MCF 10A (cell line): ENCODE measurements at regions of chr14 and their contacts with region 1.

Region 1: GRCh38 chr14:23631702-23632460 is 4.3 kb upstream of the DHRS2 start:
- DNase-seq: peak; percentile 91
- H3K4me3 Mint-ChIP-seq: no peak overlapping the region
- H3K27ac Mint-ChIP-seq: no peak overlapping the region
- H3K4me1 Mint-ChIP-seq: peaks cover 9% of the 10 kb centered on the region
- H3K27me3 Mint-ChIP-seq: no peaks in the 10 kb centered on the region
- CTCF ChIP-seq: peak; percentile 89

Region 2: DNA sequence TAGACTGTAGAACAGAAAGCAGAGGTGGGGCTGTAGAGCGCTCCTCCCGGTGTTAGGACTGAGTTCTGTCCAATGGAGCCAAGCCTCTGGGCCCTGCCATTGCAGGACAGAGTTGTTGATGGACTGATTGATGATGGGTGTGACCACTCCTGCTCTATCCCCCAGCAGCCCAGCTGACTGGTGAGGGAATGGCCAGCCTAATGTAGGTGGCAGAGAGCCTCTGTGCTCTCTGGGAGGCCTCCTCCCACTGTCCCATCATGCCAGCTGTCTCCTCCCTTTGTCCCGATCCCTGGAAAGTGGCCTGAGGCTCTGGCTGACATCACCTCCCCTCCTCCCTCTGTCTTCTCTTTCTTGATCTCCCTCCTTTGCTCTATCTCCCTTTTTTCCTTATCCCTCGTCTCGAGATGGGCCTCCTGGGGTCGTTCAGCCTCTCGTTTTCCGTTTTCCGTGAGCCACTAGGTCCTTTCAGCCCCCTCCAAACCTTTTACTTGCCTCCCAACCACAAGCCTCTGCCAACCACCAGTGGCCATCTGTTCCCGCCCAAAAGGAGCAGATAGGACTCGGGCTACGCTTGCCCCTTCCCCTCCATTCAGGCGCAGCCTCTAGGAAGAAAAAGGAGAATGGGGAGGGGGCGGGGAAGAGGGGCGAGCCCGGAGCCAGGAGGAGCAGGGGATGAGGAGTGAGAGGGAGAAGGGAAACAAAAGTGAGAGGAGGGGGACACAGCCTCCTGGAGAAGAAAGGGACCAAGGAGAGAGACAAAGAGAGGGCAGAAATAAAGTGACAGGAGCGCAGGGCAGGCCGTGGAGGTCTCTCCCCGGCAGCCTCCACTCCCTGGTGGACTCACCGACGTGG is 267.5 kb before region 1 on chr14:
- CTCF ChIA-PET with region 1: no interaction called
- POLR2A ChIA-PET with region 1: no interaction called
- intact Hi-C with region 1: no loop called
- DNase-seq: no peak
- H3K4me3 Mint-ChIP-seq: no peak overlapping the region
- H3K27ac Mint-ChIP-seq: no peak overlapping the region
- H3K4me1 Mint-ChIP-seq: no peaks in the 10 kb centered on the region
- H3K27me3 Mint-ChIP-seq: peaks cover 42% of the 10 kb centered on the region
- CTCF ChIP-seq: no peak

Region 3: GRCh38 chr14:23399591-23399990 is 232.3 kb before region 1 on chr14:
- CTCF ChIA-PET with region 1: no interaction called
- POLR2A ChIA-PET with region 1: no interaction called
- intact Hi-C with region 1: no loop called
- DNase-seq: no peak
- H3K4me3 Mint-ChIP-seq: no peak overlapping the region
- H3K27ac Mint-ChIP-seq: no peak overlapping the region
- H3K4me1 Mint-ChIP-seq: no peaks in the 10 kb centered on the region
- H3K27me3 Mint-ChIP-seq: peaks cover 42% of the 10 kb centered on the region
- CTCF ChIP-seq: no peak

Region 4: DNA sequence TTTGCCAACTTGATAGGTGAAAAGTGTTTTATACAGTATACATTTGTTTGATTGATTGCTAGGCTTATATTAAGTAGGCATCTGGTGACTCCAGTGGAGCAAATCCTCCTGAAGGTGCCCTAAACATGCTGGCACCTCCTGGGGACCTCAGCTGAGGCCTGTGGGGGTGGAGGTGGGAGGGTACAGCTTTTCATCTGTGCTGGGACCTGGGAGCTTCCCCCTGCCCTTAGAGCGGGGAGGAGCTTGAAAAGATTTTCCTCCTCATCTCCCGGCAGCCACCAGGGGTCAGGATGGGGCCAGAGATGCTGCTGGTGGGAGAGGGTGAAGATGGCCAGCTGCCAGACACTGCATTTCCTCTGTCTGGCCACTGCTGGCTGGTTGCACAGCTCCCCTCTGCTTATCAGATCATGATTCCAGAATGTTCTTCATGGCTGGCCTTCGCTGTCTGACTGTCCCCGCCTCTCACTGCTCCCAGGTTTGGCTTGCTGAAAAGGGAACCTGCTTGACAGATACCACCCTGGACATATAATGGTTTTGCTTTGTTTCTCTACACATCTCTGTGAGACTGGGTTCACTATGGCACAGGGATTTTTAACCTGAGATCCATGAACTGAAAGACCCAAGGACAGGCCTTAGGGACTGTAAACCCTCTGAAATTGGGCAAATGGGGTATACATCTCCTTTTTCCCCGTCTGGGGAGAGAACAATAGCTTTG is 42.8 kb before region 1 on chr14:
- CTCF ChIA-PET with region 1: interaction called, 30 read pairs
- POLR2A ChIA-PET with region 1: interaction called, 11 read pairs
- intact Hi-C with region 1: no loop called
- DNase-seq: peak; percentile 84
- H3K4me3 Mint-ChIP-seq: no peak overlapping the region
- H3K27ac Mint-ChIP-seq: no peak overlapping the region
- H3K4me1 Mint-ChIP-seq: no peaks in the 10 kb centered on the region
- H3K27me3 Mint-ChIP-seq: no peaks in the 10 kb centered on the region
- CTCF ChIP-seq: peak; percentile 74

Region 5: DNA sequence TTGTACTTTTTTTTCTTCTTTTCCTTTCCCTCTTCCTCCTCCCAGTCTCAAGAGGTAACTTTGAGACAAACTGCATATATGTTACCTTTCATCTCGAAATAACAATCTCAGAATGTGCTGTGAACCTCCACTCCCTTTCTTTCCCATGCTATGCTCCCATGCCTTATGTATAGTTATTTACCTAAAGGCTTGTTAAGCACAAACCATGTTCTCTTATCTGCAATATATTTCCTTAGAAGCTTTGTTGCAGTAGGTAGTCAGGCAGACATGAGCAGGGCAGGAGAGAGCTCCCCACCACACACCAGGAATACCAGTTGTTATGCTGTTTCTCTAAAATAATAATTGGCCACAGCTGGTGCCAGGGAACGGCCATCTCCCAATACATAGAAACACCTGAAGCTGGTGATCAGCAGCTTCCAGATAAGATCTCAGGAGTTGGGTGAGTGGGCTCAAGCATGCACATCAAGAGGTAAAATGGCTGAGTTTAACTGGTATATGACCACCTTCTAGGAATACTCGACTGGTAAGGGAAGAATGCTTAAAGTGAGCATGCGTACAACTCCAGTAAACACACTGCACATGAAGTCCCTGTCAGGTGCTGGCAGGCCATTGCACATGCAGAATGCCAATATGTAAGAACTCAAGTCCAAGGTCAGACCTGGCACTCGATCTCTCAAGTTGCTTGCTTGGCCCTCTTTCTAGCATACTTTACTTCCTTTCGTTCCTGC is 10.5 kb before region 1 on chr14:
- CTCF ChIA-PET with region 1: interaction called, 23 read pairs
- POLR2A ChIA-PET with region 1: no interaction called
- intact Hi-C with region 1: no loop called
- DNase-seq: no peak
- H3K4me3 Mint-ChIP-seq: no peak overlapping the region
- H3K27ac Mint-ChIP-seq: no peak overlapping the region
- H3K4me1 Mint-ChIP-seq: no peaks in the 10 kb centered on the region
- H3K27me3 Mint-ChIP-seq: peaks cover 53% of the 10 kb centered on the region
- CTCF ChIP-seq: no peak

Region 6: GRCh38 chr14:23665375-23666192 is 33.7 kb after region 1 on chr14:
- CTCF ChIA-PET with region 1: interaction called, 49 read pairs
- POLR2A ChIA-PET with region 1: no interaction called
- intact Hi-C with region 1: no loop called
- DNase-seq: peak; percentile 58
- H3K4me3 Mint-ChIP-seq: no peak overlapping the region
- H3K27ac Mint-ChIP-seq: no peak overlapping the region
- H3K4me1 Mint-ChIP-seq: peaks cover 11% of the 10 kb centered on the region
- H3K27me3 Mint-ChIP-seq: peaks cover 52% of the 10 kb centered on the region
- CTCF ChIP-seq: peak; percentile 48

Region 7: GRCh38 chr14:23881282-23881681 is 249.4 kb after region 1 on chr14:
- CTCF ChIA-PET with region 1: interaction called, 16 read pairs
- POLR2A ChIA-PET with region 1: no interaction called
- intact Hi-C with region 1: no loop called
- DNase-seq: no peak
- H3K4me3 Mint-ChIP-seq: no peak overlapping the region
- H3K27ac Mint-ChIP-seq: no peak overlapping the region
- H3K4me1 Mint-ChIP-seq: no peaks in the 10 kb centered on the region
- H3K27me3 Mint-ChIP-seq: no peaks in the 10 kb centered on the region
- CTCF ChIP-seq: no peak

Region 8: GRCh38 chr14:23922545-23922944 is 290.7 kb after region 1 on chr14:
- CTCF ChIA-PET with region 1: interaction called, 18 read pairs
- POLR2A ChIA-PET with region 1: no interaction called
- intact Hi-C with region 1: no loop called
- DNase-seq: no peak
- H3K4me3 Mint-ChIP-seq: no peak overlapping the region
- H3K27ac Mint-ChIP-seq: no peak overlapping the region
- H3K4me1 Mint-ChIP-seq: no peaks in the 10 kb centered on the region
- H3K27me3 Mint-ChIP-seq: no peaks in the 10 kb centered on the region
- CTCF ChIP-seq: no peak